ENCODE measurements at regions of chr1 and their contacts with region 1.

Region 1: DNA sequence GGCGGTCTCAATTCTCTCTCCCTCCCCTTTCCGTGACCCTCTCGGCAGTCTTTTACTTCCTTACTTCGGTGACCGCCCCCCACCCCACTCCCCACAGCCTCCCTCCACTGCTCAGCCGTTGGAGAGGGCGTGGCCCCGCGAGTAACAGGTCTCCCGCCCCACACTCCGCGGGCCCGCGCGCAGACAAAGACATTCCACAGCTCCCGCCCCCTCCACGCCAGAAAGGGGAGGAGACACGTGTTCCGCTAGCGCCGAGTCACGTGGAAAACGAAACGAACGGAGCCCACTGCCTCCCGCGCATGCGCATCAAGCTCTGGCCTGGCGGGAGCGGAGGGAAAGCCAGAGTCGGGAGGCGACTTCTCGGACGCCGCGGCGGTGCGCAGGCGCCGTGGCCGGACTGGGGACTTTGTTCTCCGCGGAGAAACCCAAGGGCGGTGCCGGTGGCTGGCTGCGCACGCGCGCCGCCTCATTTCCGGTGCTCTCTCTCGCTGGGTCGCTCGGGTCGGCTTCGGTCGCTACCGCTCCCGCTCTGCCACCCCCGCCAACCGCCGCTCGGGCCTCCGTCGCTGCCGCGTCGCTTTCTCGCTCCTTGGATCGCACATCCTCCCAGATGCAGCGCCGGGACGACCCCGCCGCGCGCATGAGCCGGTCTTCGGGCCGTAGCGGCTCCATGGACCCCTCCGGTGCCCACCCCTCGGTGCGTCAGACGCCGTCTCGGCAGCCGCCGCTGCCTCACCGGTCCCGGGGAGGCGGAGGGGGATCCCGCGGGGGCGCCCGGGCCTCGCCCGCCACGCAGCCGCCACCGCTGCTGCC is at the start of gene KHDRBS1:
- DNase-seq: peak; percentile 93 to 99 (median 98)
- H3K4me3 ChIP-seq: peak within 1 kb of the TSS; percentile 66
- H3K4me3 Mint-ChIP-seq: peak within 1 kb of the TSS; percentile 91 to 97 (median 93)
- H3K27ac ChIP-seq: peak within 1 kb of the TSS; percentile 92
- H3K27ac Mint-ChIP-seq: peak within 1 kb of the TSS; percentile 93 to 98 (median 96)
- H3K4me1 ChIP-seq: peaks cover 26% of the 10 kb centered on the region
- H3K4me1 Mint-ChIP-seq: peaks cover 28 to 38% (median 37%) of the 10 kb centered on the region in 3 donors
- H3K27me3 ChIP-seq: no peaks in the 10 kb centered on the region
- H3K27me3 Mint-ChIP-seq: peaks cover 0 to 7% of the 10 kb centered on the region in 2 donors
- total RNA-seq, gene KHDRBS1: 210 TPM

Region 2: GRCh38 chr1:31855038-31855845 is 158.3 kb before region 1 on chr1:
- CTCF ChIA-PET with region 1: no interaction called
- POLR2A ChIA-PET with region 1: no interaction called
- DNase-seq: no peak
- H3K4me3 ChIP-seq: no peak overlapping the region
- H3K4me3 Mint-ChIP-seq: no peak overlapping the region
- H3K27ac ChIP-seq: no peak overlapping the region
- H3K27ac Mint-ChIP-seq: no peak overlapping the region
- H3K4me1 ChIP-seq: no peaks in the 10 kb centered on the region
- H3K4me1 Mint-ChIP-seq: peaks cover under 1 to 3% (median 3%) of the 10 kb centered on the region in 3 donors
- H3K27me3 ChIP-seq: no peaks in the 10 kb centered on the region
- H3K27me3 Mint-ChIP-seq: no peaks in the 10 kb centered on the region

Region 3: DNA sequence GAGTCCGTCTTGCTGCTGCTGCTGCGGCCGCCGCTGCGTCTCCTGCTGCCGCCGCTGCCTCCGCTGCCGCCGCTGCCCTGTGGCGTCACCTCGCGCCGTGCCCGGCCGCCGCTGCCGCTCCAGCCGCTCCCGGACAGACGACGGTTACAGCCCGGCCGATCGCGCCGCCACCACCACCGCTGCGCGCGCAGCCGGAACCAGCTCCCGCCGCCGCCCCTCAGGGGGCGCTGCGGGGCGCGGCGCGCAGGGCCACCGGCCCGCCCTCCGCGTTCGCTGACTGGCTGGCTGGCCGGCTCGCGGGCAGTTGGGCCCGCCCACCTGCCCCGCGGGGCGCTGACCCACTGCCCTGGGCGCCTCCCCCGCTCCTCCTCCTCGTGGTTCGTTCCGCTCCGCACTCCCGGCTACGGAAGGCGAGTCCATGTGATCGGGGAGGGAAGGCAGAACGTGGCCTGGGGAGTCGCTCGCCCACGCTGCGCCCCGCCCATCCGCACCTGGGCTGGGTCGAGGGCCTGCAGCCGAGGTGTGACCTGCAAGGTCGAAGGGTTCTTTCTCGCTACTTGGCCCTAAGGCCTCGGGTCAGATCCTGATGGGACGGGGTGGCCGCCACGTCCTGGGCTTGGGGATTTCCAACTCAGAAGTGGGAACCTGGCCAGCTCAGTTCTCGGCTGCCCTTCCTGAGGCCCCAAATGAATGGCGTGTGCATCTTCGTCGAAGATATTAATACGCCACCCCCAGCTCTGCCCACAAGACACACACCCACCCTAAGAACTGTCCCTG is 75.2 kb before region 1 on chr1 and contains the start of gene PTP4A2:
- CTCF ChIA-PET with region 1: interaction called, 3 read pairs
- POLR2A ChIA-PET with region 1: interaction called, 16 read pairs
- DNase-seq: peak; percentile 75 to 85 (median 80)
- H3K4me3 ChIP-seq: peak within 1 kb of the TSS; percentile 83
- H3K4me3 Mint-ChIP-seq: peak within 1 kb of the TSS; percentile 86 to 100 (median 97)
- H3K27ac ChIP-seq: peak within 1 kb of the TSS; percentile 77
- H3K27ac Mint-ChIP-seq: peak within 1 kb of the TSS; percentile 90 to 99 (median 96)
- H3K4me1 ChIP-seq: peaks cover 77% of the 10 kb centered on the region
- H3K4me1 Mint-ChIP-seq: peaks cover 72 to 79% (median 75%) of the 10 kb centered on the region in 3 donors
- H3K27me3 ChIP-seq: no peaks in the 10 kb centered on the region
- H3K27me3 Mint-ChIP-seq: no peaks in the 10 kb centered on the region
- total RNA-seq, gene PTP4A2: 339 to 368 TPM

Region 4: GRCh38 chr1:32115496-32115895 is 101.9 kb after region 1 on chr1:
- CTCF ChIA-PET with region 1: no interaction called
- POLR2A ChIA-PET with region 1: no interaction called
- DNase-seq: no peak
- H3K4me3 ChIP-seq: no peak overlapping the region
- H3K4me3 Mint-ChIP-seq: peak overlapping the region in 1 of 7 donors; percentile 15
- H3K27ac ChIP-seq: no peak overlapping the region
- H3K27ac Mint-ChIP-seq: peak overlapping the region in 1 of 8 donors; percentile 86
- H3K4me1 ChIP-seq: peaks cover 48% of the 10 kb centered on the region
- H3K4me1 Mint-ChIP-seq: peaks cover 49 to 72% (median 52%) of the 10 kb centered on the region in 3 donors
- H3K27me3 ChIP-seq: no peaks in the 10 kb centered on the region
- H3K27me3 Mint-ChIP-seq: no peaks in the 10 kb centered on the region

Measured in CD8-positive, alpha-beta memory T cell (primary cell).